Cardiac septum (tissue), 1 donor: ENCODE measurements at regions of chr15 and their contacts with region 1.

Region 1: DNA sequence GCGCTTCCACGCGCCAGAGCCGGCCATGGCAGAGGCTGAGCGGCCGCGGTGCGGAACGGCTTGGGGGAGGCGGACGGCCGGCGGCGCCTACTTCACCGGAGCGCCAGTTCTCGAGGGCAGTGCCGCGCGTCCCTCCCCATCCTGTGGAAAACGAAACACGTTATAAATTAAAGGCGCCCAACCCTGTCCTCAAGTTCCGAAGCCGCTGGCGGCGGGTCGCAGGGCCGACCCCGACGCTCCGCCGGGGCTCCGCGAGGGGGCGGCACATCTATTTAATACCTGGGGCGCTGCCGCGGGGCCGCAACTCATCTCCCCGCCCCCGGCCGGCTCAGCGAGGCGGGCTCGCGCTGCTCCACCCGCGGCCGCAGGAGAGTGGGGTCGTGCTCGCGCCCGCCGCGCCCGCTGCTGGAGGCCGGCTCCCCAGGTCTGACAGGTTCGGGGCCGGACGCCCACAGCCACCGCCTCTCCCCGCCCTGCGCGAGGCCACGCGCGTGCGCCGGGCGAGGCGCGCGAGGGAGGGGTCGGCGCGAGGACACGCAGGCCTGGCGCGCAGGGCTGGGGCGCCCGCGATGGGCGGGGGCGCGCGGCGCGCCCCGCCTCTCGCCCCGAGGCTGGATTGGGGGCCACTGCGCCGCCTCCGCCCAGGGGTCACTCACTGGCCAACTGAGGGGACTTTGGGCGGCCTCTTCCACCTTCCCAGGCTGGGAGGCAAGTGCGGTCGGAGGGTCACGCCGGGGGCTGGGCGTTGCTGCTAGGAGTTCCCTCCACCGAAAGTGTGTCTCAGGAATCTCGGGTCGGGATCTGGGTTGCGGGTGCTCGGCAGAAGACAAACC is at the start of gene SLC30A4:
- DNase-seq: peak; percentile 81
- total RNA-seq, gene SLC30A4: 3.3 TPM

Region 2: DNA sequence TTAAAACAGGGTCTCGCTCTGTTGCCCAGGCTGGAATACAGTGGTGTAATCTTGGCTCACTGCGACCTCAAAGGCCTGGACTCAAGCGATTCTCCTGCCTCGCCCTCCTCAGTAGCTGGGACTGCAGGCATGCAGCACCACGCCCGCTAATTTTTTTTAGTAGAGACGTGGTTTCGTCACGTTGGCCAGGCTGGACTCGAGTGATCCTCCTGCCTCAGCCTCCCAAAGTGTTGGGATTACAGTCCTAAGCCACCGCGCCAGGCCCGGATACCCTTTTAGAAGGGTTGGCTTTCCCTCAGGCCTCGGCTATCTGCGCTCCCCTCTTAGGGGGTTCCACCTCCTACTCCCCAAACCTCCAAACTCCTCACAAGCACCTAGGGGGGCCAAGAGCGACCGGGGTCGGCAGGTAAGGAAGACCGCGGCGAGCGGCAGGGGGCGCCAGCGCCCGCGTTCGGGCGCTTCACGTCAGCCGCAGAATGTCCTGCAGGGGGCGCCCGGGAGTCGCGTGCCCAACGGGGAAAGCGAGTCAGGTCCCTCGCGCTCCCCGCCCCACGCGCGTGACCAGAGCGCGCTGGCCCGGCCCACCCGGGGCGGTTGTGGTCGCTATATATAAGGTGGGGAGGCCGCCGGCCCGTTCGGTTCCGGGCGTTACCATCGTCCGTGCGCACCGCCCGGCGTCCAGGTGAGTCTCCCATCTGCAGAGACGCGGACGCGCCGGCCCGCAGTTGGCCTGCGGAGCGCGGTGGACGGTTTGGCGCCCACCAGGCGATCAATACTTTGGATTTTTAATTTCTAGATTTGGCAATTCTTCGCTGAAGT is 92.4 kb before region 1 on chr15:
- intact Hi-C with region 1: no loop called
- DNase-seq: peak; percentile 91

Region 3: DNA sequence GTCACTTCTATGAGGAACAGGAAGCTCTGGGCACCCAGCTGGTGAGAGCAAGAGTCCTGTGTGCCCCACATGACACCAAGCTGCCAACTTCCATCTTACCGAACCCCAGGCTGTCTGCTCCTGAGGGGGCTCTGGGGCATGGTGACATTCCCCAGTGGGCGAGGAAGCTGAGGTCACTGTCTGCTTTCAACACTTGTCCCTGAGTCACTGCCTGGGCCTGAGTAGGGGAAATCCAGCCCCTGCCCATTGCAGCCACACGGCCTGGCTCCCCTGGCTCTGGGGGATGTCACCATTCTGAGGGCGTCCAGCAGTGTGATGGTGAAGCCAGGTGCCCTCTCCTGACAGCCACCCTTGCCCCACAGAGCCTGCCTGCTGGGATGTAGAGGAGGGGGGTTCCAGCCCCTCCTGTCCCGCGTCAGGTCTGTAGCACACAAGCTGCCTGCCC is 74.5 kb before region 1 on chr15:
- intact Hi-C with region 1: no loop called
- DNase-seq: no peak

Region 4: DNA sequence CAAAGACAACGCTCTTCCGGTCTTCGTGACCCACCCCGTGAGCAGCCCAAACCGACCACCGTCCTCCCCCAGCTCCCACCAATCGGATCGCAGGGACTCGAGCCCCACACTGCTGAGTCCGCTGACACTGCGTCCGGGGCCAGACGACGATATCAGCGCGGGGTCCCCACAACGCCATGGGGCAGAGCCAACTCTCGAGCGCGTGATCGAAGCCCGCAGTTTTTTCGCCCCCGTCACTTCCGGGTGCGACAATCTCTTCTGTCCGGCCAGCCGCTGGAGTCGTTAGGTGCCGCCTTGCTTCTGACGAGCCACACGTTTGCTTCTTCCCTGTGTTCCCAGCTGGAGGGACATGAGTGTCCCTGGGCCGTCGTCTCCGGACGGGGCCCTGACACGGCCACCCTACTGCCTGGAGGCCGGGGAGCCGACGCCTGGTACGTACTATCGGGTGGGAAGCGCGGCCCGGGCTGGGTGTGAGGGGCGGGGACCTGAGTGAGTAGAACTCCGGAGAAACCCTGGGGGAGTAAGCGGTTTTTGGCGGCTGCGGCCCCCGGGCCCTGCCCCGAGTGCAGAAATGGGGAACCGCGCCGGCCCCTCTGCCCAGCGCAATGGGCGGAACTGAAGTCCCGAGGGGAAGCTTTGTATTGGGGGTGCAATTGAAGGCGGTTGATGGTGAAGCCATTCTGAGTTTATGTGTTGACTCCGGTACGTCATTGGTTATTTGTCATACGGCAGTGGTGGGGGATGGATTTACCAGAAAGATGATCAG is 64.7 kb after region 1 on chr15 and contains the start of gene BLOC1S6:
- intact Hi-C with region 1: loop called (anchors 1 kb)
- DNase-seq: peak; percentile 94
- total RNA-seq, gene BLOC1S6: 29.1 TPM

Region 5: GRCh38 chr15:45611305-45611704 is 88.8 kb after region 1 on chr15:
- intact Hi-C with region 1: loop called (anchors 5 kb)
- DNase-seq: no peak